Activated T-helper 2 cell treated with anti-CD3 and anti-CD28 coated beads, Interferon-gamma antibody, Interleukin-2, Interleukin-4, amounts not matched to agents 10 μg/mL and 5 μg/mL and 100 μg/mL, durations not matched to agents 14 hours and 24 hours and 36 hours (primary cell): ENCODE measurements at regions of chrX and their contacts with region 1.

Region 1: GRCh38 chrX:71118032-71118984 is at the start of gene MED12:
- DNase-seq: peak; percentile 74
- H3K4me3 Mint-ChIP-seq: peak within 1 kb of the TSS; percentile 80
- H3K27ac Mint-ChIP-seq: peak within 1 kb of the TSS; percentile 83
- H3K4me1 Mint-ChIP-seq: peaks cover 16% of the 10 kb centered on the region
- H3K27me3 Mint-ChIP-seq: no peaks in the 10 kb centered on the region
- total RNA-seq, gene MED12: 71.1 and 71.3 TPM in 2 replicates

Region 2: DNA sequence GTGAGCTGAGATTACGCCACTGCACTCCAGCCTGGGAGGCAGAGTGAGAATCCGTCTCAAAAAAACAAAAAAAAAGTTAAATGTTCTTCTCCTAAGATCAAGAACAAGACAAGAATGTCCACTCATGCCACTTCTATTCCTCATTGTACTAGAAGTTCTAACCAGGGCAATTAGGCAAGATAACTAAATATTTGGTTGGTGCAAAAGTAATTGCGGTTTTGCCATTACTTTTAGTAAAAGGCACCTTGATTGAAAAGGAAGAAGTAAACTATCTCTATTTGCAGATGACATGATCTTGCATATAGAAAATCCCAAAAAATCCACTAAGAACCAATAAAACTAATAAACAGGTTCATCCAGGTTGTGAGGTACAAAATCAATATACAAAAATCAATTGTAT is 163.4 kb before region 1 on chrX:
- intact Hi-C with region 1: no loop called
- DNase-seq: no peak
- H3K4me3 Mint-ChIP-seq: no peak overlapping the region
- H3K27ac Mint-ChIP-seq: no peak overlapping the region
- H3K4me1 Mint-ChIP-seq: no peaks in the 10 kb centered on the region
- H3K27me3 Mint-ChIP-seq: peaks cover 2% of the 10 kb centered on the region

Region 3: GRCh38 chrX:71068764-71069062 is 49.6 kb before region 1 on chrX:
- intact Hi-C with region 1: no loop called
- DNase-seq: no peak
- H3K4me3 Mint-ChIP-seq: peak overlapping the region; percentile 79
- H3K27ac Mint-ChIP-seq: peak overlapping the region; percentile 91
- H3K4me1 Mint-ChIP-seq: peaks cover 15% of the 10 kb centered on the region
- H3K27me3 Mint-ChIP-seq: peaks cover 13% of the 10 kb centered on the region

Region 4: DNA sequence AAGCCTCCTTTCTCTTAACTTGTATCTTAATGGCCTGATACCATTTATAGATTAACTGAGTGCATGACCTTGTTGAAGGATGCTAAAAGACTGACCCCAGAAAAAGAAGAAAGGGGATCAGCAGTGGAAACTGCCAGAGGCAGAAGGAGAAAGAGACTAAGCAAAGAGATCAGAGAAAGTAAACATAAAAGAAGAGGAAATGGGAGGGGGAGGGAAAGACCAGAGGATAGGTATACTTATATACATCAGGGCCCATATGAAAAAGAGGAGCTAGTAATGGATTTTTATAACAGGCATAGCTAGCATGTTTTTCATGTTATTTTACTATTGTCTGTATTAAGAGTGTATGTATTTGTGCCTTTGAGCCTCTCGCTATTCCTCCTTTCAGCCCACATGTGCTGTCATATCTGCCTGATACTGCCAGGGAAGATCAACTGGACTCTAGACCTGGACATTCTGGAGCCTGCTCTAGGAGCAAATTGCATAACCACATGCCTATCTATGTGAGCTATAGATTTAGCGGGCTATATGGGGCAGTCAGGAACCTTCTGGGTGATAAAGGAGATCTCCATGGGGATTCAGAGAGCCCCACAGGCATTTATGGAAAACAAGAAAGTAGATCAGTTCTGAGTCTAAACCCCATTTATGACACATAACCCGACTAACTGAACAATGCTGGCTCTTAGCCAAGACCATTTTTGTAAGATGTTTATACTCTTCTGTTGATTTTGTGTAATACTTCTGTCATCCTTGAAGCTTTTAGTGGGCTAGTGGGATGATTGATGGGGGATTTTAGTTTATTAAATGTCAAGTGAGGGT is 36.8 kb before region 1 on chrX:
- intact Hi-C with region 1: no loop called
- DNase-seq: no peak
- H3K4me3 Mint-ChIP-seq: no peak overlapping the region
- H3K27ac Mint-ChIP-seq: no peak overlapping the region
- H3K4me1 Mint-ChIP-seq: peaks cover 2% of the 10 kb centered on the region
- H3K27me3 Mint-ChIP-seq: peaks cover 4% of the 10 kb centered on the region

Region 5: GRCh38 chrX:71103110-71103983 is 15.0 kb before region 1 on chrX:
- intact Hi-C with region 1: loop called (anchors 2 kb)
- DNase-seq: no peak
- H3K4me3 Mint-ChIP-seq: peak overlapping the region; percentile 82
- H3K27ac Mint-ChIP-seq: peak overlapping the region; percentile 92
- H3K4me1 Mint-ChIP-seq: peaks cover 59% of the 10 kb centered on the region
- H3K27me3 Mint-ChIP-seq: no peaks in the 10 kb centered on the region